ENCODE measurements at regions of chr6 and their contacts with region 1.

Region 1: GRCh38 chr6:96837081-96837971 is at the start of gene GPR63:
- DNase-seq: no peak
- H3K4me3 ChIP-seq: peak within 1 kb of the TSS; percentile 72 to 87 (median 78)
- H3K27ac ChIP-seq: peak within 1 kb of the TSS; percentile 33 to 77 (median 65)
- H3K4me1 ChIP-seq: peaks cover 10 to 21% (median 14%) of the 10 kb centered on the region in 4 donors
- H3K27me3 ChIP-seq: no peaks in the 10 kb centered on the region
- CTCF ChIP-seq: no peak
- EP300 ChIP-seq: no peak
- POLR2A ChIP-seq: no peak
- total RNA-seq, gene GPR63: 0.83 to 2.0 (median 0.93) TPM

Region 2: DNA sequence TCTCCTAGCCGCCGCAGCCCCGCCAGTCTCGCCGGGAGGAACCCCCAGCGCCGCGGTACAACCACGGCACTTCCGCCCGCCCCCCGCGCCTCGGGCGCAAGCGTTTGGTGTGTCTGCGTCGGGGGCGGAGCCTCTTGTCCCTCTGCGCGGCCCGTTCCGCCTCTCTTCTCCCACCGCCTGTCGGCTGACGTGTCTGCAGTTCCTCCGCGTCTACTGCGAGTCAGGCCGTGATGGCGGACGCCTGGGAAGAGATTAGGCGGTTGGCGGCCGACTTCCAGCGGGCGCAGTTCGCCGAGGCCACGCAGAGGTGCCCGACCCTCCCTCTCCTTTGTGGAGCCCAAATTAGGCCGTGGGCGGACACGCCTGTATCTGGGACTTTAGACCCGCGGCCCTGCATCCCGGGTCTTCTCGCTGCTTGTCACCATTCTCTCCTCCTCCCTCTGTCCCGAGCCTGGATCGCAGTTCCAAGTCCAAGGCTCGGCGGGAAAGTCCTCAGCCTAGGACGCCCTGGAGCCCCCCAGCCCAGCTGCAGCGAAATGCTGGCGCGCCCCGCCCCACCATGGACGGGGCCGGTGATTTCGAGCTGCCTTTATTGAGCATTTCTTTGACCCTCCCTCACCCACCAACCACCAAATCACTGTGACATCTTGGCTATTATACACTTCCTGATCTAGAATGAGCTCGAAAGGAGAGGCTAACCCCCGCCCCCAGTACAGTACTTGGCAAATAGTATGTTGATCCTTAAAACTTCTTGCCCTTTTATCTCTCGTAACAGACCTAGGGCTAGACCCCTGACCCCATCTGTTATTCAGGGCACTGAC is 315.5 kb before region 1 on chr6 and contains the start of gene UFL1:
- intact Hi-C with region 1: loop called (anchors 10 kb)
- DNase-seq: peak; percentile 97
- H3K4me3 ChIP-seq: peak within 1 kb of the TSS; percentile 72 to 95 (median 79)
- H3K27ac ChIP-seq: peak within 1 kb of the TSS; percentile 92 to 97 (median 93)
- H3K4me1 ChIP-seq: peaks cover 21 to 38% (median 30%) of the 10 kb centered on the region in 4 donors
- H3K27me3 ChIP-seq: no peaks in the 10 kb centered on the region
- CTCF ChIP-seq: peak in 1 of 3 experiments; percentile 27
- EP300 ChIP-seq: no peak
- POLR2A ChIP-seq: peak; percentile 69
- total RNA-seq, gene UFL1: 21.3 to 27.0 (median 23.2) TPM

Region 3: DNA sequence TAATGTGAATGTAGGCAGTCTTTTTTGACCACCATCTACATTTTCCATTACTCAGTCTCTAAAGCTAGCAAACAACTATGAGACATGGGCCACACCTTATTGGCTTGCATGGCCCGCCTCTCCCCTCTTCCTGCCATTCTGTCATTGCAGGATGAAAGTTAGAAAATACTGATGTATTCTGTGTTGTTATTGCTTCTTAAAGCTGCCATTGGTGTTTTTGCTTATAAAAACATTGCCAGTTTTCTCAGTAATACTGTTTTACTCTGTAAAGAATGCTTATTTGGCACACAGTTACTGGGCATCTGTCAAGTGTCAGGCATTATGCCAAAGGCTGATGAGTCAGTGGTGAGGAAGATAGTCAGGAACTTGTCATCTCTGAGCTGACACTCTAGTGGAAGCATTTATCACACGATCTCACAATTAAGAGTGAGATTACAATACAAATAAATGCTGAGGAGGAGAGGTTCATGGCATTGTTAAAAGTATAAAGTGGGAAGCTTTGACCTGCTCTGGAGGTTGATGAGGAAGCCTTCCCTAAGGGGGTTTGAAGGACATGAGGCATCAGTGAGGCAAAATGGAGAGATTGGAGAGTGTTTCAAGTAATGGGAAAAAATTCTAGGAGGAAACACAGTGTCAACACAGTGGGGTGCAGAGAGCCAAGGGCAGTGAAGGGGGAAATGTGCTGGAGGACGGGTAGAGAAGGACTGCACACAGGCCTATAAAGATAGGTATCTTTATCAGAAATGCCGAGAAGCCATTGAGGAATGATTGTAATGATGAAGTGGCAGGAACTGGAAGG is 101.9 kb after region 1 on chr6:
- intact Hi-C with region 1: no loop called
- DNase-seq: no peak
- H3K4me3 ChIP-seq: no peak overlapping the region
- H3K27ac ChIP-seq: no peak overlapping the region
- H3K4me1 ChIP-seq: peaks cover 0 to 12% (median 0%) of the 10 kb centered on the region in 4 donors
- H3K27me3 ChIP-seq: peaks cover 0 to 5% (median 0%) of the 10 kb centered on the region in 4 donors
- CTCF ChIP-seq: no peak
- EP300 ChIP-seq: no peak
- POLR2A ChIP-seq: no peak

Region 4: GRCh38 chr6:97097068-97098047 is 260.0 kb after region 1 on chr6:
- intact Hi-C with region 1: no loop called
- DNase-seq: no peak
- H3K4me3 ChIP-seq: peak overlapping the region in 2 of 4 donors; percentile 2 to 6
- H3K27ac ChIP-seq: no peak overlapping the region
- H3K4me1 ChIP-seq: no peaks in the 10 kb centered on the region
- H3K27me3 ChIP-seq: no peaks in the 10 kb centered on the region
- CTCF ChIP-seq: no peak
- EP300 ChIP-seq: no peak
- POLR2A ChIP-seq: no peak

Measured in esophagus muscularis mucosa (tissue), 4 donors.